IMR-90 (cell line): ENCODE measurements at regions of chr6 and their contacts with region 1.

Region 1: GRCh38 chr6:154156135-154156896 is 117.3 kb downstream of the OPRM1 start:
- DNase-seq: peak; percentile 45
- ATAC-seq: peak; percentile 78
- H3K4me3 ChIP-seq: no peak overlapping the region
- H3K27ac ChIP-seq: no peak overlapping the region
- H3K4me1 ChIP-seq: peaks cover 3% of the 10 kb centered on the region; the same call in 1 of the 2 replicates
- H3K27me3 ChIP-seq: no peaks in the 10 kb centered on the region; the same call in 1 of the 2 replicates
- CTCF ChIP-seq: peak; percentile 73
- POLR2A ChIP-seq: no peak
- RAD21 ChIP-seq: peak; percentile 76

Region 2: DNA sequence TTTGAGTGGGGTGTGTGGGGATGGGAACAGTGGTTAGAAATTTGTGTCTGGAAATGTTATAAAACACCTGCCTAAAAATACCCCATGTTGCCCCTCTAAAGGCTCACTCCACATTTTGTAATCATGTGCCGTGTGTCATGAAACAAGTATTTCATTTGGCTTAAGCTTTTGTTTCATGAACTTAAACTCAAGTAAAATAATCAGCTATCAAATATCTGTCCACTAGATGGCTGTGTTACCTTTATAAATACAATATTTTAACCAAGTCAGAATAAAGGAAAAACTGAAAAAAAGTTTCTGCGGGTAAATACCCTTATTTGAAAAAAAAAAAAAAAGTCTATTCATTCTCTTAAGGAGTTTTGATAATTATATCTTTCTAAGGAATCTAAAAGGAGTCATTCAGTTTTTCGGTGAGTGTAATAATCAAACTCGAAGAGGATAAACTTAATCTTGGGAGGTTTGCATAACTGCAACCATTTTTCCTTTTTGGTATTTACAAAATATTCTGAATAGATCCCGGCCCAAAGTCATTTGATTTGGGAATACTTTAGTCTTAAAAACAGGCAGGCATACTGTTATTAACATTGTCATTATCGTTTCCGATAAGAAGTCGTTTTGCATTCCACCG is 1123.9 kb before region 1 on chr6:
- CTCF ChIA-PET with region 1: no interaction called
- POLR2A ChIA-PET with region 1: no interaction called
- dilution Hi-C with region 1: no loop called
- in situ Hi-C with region 1: loop called (anchors 25 kb)
- intact Hi-C with region 1: loop called (anchors 10 kb)
- DNase-seq: peak; percentile 81
- ATAC-seq: peak; percentile 59
- H3K4me3 ChIP-seq: no peak overlapping the region
- H3K27ac ChIP-seq: no peak overlapping the region; the same call in 1 of the 2 replicates
- H3K4me1 ChIP-seq: peaks cover 9% of the 10 kb centered on the region
- H3K27me3 ChIP-seq: no peaks in the 10 kb centered on the region
- CTCF ChIP-seq: peak; percentile 65
- POLR2A ChIP-seq: no peak
- RAD21 ChIP-seq: peak; percentile 61

Region 3: DNA sequence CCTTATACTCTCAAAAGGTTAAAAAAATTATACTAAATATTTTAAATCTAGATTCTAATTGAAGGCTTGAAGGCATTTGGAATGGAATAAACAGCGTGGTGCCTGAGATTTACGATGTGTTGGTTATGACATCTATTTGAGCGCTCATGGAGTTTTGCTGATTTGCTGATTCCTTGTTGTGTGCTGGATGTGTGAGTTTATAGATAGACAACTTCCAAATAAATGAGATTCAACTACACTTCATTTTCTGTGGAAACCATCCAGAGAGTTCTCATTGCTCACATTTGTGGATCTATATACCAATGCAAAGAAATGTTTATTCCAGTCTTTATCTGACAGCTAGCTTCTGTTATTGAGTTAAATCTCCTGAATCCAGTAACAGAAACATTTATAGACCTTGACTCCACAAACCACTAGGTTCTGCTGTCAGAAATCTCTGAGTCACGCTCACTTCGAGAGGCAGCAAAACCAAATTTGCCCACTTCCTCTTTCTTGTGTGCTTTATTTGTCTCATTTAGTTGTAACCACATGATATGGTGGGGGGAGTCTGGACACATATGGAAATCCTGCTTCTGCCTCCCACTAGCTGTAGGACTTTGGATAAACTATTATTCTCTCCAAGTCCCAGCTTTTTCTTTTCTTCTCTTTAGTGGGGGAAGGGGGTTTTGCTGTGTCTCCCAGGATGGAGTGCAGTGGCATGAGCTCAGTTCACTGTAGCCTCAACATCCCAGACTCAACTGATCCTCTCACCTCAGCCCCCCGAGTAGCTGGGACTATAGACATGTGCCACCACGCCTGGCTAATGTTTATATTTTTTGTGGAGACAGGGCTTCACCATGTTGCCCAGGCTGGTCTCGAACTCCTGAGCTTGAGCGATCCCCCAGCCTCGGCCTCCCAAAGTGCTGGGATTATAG is 145.8 kb after region 1 on chr6:
- CTCF ChIA-PET with region 1: no interaction called
- POLR2A ChIA-PET with region 1: no interaction called
- dilution Hi-C with region 1: no loop called
- in situ Hi-C with region 1: no loop called
- intact Hi-C with region 1: no loop called
- DNase-seq: peak; percentile 95
- ATAC-seq: peak; percentile 86
- H3K4me3 ChIP-seq: no peak overlapping the region
- H3K27ac ChIP-seq: peak overlapping the region; percentile 98
- H3K4me1 ChIP-seq: peaks cover 16% of the 10 kb centered on the region
- H3K27me3 ChIP-seq: no peaks in the 10 kb centered on the region
- CTCF ChIP-seq: no peak
- POLR2A ChIP-seq: no peak
- RAD21 ChIP-seq: no peak

Region 4: GRCh38 chr6:154370545-154370944 is 214.2 kb after region 1 on chr6:
- CTCF ChIA-PET with region 1: interaction called, 4 read pairs
- POLR2A ChIA-PET with region 1: no interaction called
- dilution Hi-C with region 1: loop called (anchors 25 kb)
- in situ Hi-C with region 1: loop called (anchors 5 kb)
- intact Hi-C with region 1: loop called (anchors 1 kb)
- DNase-seq: peak; percentile 58
- ATAC-seq: peak; percentile 89
- H3K4me3 ChIP-seq: no peak overlapping the region
- H3K27ac ChIP-seq: no peak overlapping the region
- H3K4me1 ChIP-seq: peaks cover 2% of the 10 kb centered on the region; the same call in 1 of the 2 replicates
- H3K27me3 ChIP-seq: no peaks in the 10 kb centered on the region
- CTCF ChIP-seq: peak; percentile 56
- POLR2A ChIP-seq: no peak
- RAD21 ChIP-seq: peak; percentile 67

Region 5: GRCh38 chr6:154410619-154411072 is 254.3 kb after region 1 on chr6:
- CTCF ChIA-PET with region 1: no interaction called
- POLR2A ChIA-PET with region 1: interaction called, 4 read pairs
- dilution Hi-C with region 1: no loop called
- in situ Hi-C with region 1: no loop called
- intact Hi-C with region 1: loop called (anchors 1 kb)
- DNase-seq: peak; percentile 97
- ATAC-seq: peak; percentile 84
- H3K4me3 ChIP-seq: peak overlapping the region; percentile 9; the same call in 1 of the 2 replicates
- H3K27ac ChIP-seq: peak overlapping the region; percentile 77
- H3K4me1 ChIP-seq: peaks cover 16% of the 10 kb centered on the region
- H3K27me3 ChIP-seq: no peaks in the 10 kb centered on the region
- CTCF ChIP-seq: no peak
- POLR2A ChIP-seq: no peak
- RAD21 ChIP-seq: peak; percentile 10; the same call in 1 of the 2 replicates

Region 6: DNA sequence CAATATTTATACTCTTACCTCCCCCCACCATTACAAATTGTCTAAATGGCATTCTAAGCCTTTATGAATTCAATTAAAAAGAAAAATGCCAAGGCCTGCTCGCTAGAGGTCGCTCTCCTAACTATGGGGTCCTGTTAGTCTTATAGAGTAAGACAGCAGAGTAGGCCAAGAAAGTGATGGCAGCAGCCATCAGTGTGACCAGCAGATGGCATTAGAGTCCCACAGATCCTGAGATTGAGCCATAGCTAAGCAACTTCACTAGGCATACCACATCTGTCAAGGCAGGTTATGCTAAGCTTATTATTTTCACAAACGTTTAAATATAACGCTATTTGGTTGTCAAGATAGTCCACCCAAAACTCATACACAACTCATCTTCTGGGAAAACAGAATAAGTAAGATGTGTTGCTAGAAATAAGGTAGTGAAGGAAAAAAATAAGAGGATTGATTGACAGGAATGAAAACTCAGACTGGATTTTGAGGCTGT is 519.3 kb after region 1 on chr6:
- CTCF ChIA-PET with region 1: no interaction called
- POLR2A ChIA-PET with region 1: no interaction called
- dilution Hi-C with region 1: no loop called
- in situ Hi-C with region 1: loop called (anchors 10 kb)
- intact Hi-C with region 1: loop called (anchors 1 kb)
- DNase-seq: peak; percentile 96
- ATAC-seq: peak; percentile 98
- H3K4me3 ChIP-seq: no peak overlapping the region
- H3K27ac ChIP-seq: no peak overlapping the region
- H3K4me1 ChIP-seq: no peaks in the 10 kb centered on the region
- H3K27me3 ChIP-seq: peaks cover 2% of the 10 kb centered on the region; the same call in 1 of the 2 replicates
- CTCF ChIP-seq: peak; percentile 100; the same call in 1 of the 2 replicates
- POLR2A ChIP-seq: peak; percentile 56; the same call in 1 of the 2 replicates
- RAD21 ChIP-seq: peak; percentile 99